Calu3 (cell line): ENCODE measurements at regions of chr20 and their contacts with region 1.

Region 1: GRCh38 chr20:13425381-13426135 is 204.5 kb downstream of the ISM1 start:
- DNase-seq: no peak
- H3K4me3 Mint-ChIP-seq: no peak overlapping the region
- H3K27ac Mint-ChIP-seq: no peak overlapping the region
- H3K4me1 Mint-ChIP-seq: peaks cover 15% of the 10 kb centered on the region
- H3K27me3 Mint-ChIP-seq: no peaks in the 10 kb centered on the region
- CTCF ChIP-seq: no peak

Region 2: GRCh38 chr20:13336308-13337089 is 89.1 kb before region 1 on chr20:
- CTCF ChIA-PET with region 1: no interaction called
- intact Hi-C with region 1: loop called (anchors 5 kb)
- DNase-seq: peak; percentile 60
- H3K4me3 Mint-ChIP-seq: peak overlapping the region; percentile 41
- H3K27ac Mint-ChIP-seq: peak overlapping the region; percentile 80
- H3K4me1 Mint-ChIP-seq: peaks cover 69% of the 10 kb centered on the region
- H3K27me3 Mint-ChIP-seq: no peaks in the 10 kb centered on the region
- CTCF ChIP-seq: no peak

Region 3: DNA sequence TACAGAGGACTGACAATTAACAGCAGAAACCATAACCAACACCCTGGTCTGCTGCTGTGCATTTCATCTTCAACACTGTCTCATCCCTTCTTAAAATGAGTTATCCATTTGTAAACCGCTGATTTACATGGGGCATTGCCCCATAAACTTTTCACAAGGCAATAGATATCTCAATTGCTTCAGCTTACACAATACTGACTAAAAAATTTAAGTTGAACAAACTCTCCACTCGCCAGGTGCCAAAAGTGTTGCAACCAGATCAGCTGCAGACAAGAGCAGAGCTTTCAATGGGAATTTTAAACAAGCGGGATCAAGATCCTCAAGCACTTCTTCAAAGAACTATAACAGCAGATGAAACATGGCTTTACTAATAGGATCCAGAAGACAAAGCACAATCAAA is 30.2 kb after region 1 on chr20:
- CTCF ChIA-PET with region 1: no interaction called
- intact Hi-C with region 1: loop called (anchors 1 kb)
- DNase-seq: no peak
- H3K4me3 Mint-ChIP-seq: no peak overlapping the region
- H3K27ac Mint-ChIP-seq: no peak overlapping the region
- H3K4me1 Mint-ChIP-seq: peaks cover 16% of the 10 kb centered on the region
- H3K27me3 Mint-ChIP-seq: no peaks in the 10 kb centered on the region
- CTCF ChIP-seq: no peak

Region 4: GRCh38 chr20:13546497-13547131 is 121.1 kb after region 1 on chr20:
- CTCF ChIA-PET with region 1: no interaction called
- intact Hi-C with region 1: loop called (anchors 10 kb)
- DNase-seq: peak; percentile 75
- H3K4me3 Mint-ChIP-seq: no peak overlapping the region
- H3K27ac Mint-ChIP-seq: no peak overlapping the region
- H3K4me1 Mint-ChIP-seq: no peaks in the 10 kb centered on the region
- H3K27me3 Mint-ChIP-seq: no peaks in the 10 kb centered on the region
- CTCF ChIP-seq: peak; percentile 60